ENCODE measurements at regions of chr17 and their contacts with region 1.

Region 1: GRCh38 chr17:16232391-16232790 is 15.4 kb downstream of the PIGL start:
- DNase-seq: no peak
- H3K4me3 Mint-ChIP-seq: no peak overlapping the region
- H3K27ac Mint-ChIP-seq: no peak overlapping the region
- H3K4me1 Mint-ChIP-seq: peaks cover 19% of the 10 kb centered on the region
- H3K27me3 Mint-ChIP-seq: no peaks in the 10 kb centered on the region

Region 2: DNA sequence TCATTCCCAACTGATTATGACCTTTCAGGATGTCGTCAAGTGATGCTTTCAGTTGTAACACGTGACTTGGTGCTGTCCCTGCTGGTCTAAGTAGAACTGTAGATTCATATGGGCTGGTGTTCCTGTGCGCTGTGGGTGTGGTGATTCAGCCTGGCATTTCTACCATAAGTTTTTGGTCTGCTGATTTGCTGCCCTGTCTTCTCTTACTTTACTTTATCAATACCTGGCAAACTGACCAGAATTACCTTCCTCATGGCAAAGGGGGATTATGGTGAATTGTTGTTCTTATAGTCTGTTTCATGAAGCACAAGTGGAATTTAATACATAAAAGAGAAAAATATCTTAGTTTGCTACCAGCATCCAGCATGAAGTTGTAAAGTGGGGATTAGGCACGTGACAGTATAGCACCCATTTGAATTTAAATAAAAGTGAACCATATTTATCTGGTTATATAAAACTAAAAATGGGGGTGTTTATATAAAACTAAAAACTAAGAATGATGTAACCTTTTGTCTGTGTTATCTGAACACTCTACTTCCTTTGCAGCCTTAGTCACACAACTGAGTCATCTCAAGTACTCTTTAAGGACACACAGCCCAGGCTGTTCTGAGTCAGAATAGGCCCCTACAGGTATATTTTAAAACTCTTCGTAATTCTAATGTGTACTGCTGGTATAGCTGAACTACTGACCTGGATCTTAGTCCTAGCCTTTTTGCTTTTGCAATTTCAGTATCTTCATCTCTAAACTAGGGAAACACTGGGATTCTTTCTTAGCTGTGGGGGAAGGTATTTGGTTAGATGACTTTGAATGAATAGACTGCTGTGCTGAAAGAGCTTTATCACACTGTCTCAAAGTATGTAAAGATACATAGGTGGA is 204.4 kb before region 1 on chr17:
- CTCF ChIA-PET with region 1: no interaction called
- POLR2A ChIA-PET with region 1: no interaction called
- intact Hi-C with region 1: loop called (anchors 1 kb)
- DNase-seq: peak; percentile 81
- H3K4me3 Mint-ChIP-seq: peak overlapping the region; percentile 64
- H3K27ac Mint-ChIP-seq: peak overlapping the region; percentile 97
- H3K4me1 Mint-ChIP-seq: peaks cover 48% of the 10 kb centered on the region
- H3K27me3 Mint-ChIP-seq: no peaks in the 10 kb centered on the region

Region 3: GRCh38 chr17:16171616-16172015 is 60.8 kb before region 1 on chr17:
- CTCF ChIA-PET with region 1: no interaction called
- POLR2A ChIA-PET with region 1: no interaction called
- intact Hi-C with region 1: no loop called
- DNase-seq: no peak
- H3K4me3 Mint-ChIP-seq: no peak overlapping the region
- H3K27ac Mint-ChIP-seq: no peak overlapping the region
- H3K4me1 Mint-ChIP-seq: peaks cover 13% of the 10 kb centered on the region
- H3K27me3 Mint-ChIP-seq: no peaks in the 10 kb centered on the region

Region 4: GRCh38 chr17:16199093-16199492 is 33.3 kb before region 1 on chr17:
- CTCF ChIA-PET with region 1: no interaction called
- POLR2A ChIA-PET with region 1: no interaction called
- intact Hi-C with region 1: no loop called
- DNase-seq: no peak
- H3K4me3 Mint-ChIP-seq: no peak overlapping the region
- H3K27ac Mint-ChIP-seq: peak overlapping the region; percentile 39
- H3K4me1 Mint-ChIP-seq: peaks cover 54% of the 10 kb centered on the region
- H3K27me3 Mint-ChIP-seq: no peaks in the 10 kb centered on the region

Measured in activated CD4-positive, alpha-beta memory T cell treated with anti-CD3 and anti-CD28 coated beads for 36 hours (primary cell).